Activated CD8-positive, alpha-beta T cell treated with anti-CD3 and anti-CD28 coated beads for 36 hours (primary cell): ENCODE measurements at regions of chr6 and their contacts with region 1.

Region 1: GRCh38 chr6:34027445-34027936 is 118.4 kb downstream of the GRM4 start:
- DNase-seq: peak; percentile 71
- ATAC-seq: peak; percentile 68
- H3K4me3 Mint-ChIP-seq: no peak overlapping the region
- H3K27ac Mint-ChIP-seq: no peak overlapping the region
- H3K4me1 Mint-ChIP-seq: no peaks in the 10 kb centered on the region
- H3K27me3 Mint-ChIP-seq: no peaks in the 10 kb centered on the region
- CTCF ChIP-seq: peak; percentile 96

Region 2: GRCh38 chr6:33851959-33852358 is 175.5 kb before region 1 on chr6:
- CTCF ChIA-PET with region 1: interaction called, 4 read pairs
- POLR2A ChIA-PET with region 1: no interaction called
- intact Hi-C with region 1: loop called (anchors 10 kb)
- DNase-seq: peak; percentile 24
- ATAC-seq: no peak
- H3K4me3 Mint-ChIP-seq: no peak overlapping the region
- H3K27ac Mint-ChIP-seq: no peak overlapping the region
- H3K4me1 Mint-ChIP-seq: peaks cover 16% of the 10 kb centered on the region
- H3K27me3 Mint-ChIP-seq: peaks cover 19% of the 10 kb centered on the region
- CTCF ChIP-seq: no peak

Region 3: GRCh38 chr6:33988121-33989015 is 39.1 kb before region 1 on chr6:
- CTCF ChIA-PET with region 1: no interaction called
- POLR2A ChIA-PET with region 1: no interaction called
- intact Hi-C with region 1: no loop called
- DNase-seq: no peak
- ATAC-seq: no peak
- H3K4me3 Mint-ChIP-seq: no peak overlapping the region
- H3K27ac Mint-ChIP-seq: no peak overlapping the region
- H3K4me1 Mint-ChIP-seq: no peaks in the 10 kb centered on the region
- H3K27me3 Mint-ChIP-seq: peaks cover 3% of the 10 kb centered on the region
- CTCF ChIP-seq: no peak

Region 4: DNA sequence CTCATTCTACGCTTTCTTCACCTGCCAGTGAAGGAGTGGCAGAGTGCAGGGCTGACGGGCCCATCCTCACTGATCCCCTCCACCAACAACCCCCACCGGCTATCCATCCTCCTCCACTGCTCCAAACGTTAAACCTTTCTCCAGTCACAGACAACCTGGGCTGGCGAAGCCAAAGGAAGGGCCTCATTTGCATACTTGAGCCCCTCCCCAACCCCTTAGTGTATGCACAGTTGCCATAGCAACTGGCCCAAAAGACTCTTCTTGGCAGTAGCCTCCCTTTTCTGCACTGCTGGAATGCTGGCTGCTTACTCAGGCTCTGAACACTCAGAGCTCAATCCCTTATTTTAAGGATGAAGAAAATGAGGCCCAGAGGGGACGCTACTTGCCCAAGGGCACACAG is 11.9 kb before region 1 on chr6:
- CTCF ChIA-PET with region 1: interaction called, 17 read pairs
- POLR2A ChIA-PET with region 1: no interaction called
- intact Hi-C with region 1: no loop called
- DNase-seq: no peak
- ATAC-seq: no peak
- H3K4me3 Mint-ChIP-seq: no peak overlapping the region
- H3K27ac Mint-ChIP-seq: no peak overlapping the region
- H3K4me1 Mint-ChIP-seq: no peaks in the 10 kb centered on the region
- H3K27me3 Mint-ChIP-seq: no peaks in the 10 kb centered on the region
- CTCF ChIP-seq: no peak